T-cell (primary cell): ENCODE measurements at regions of chr13 and their contacts with region 1.

Region 1: GRCh38 chr13:28796938-28797257 is 23.2 kb upstream of the MTUS2 start:
- DNase-seq: no peak
- ATAC-seq: no peak
- H3K4me3 ChIP-seq: no peak overlapping the region
- H3K4me3 Mint-ChIP-seq: peak overlapping the region in 1 of 3 donors; percentile 70
- H3K27ac ChIP-seq: no peak overlapping the region
- H3K27ac Mint-ChIP-seq: no peak overlapping the region
- H3K4me1 ChIP-seq: peaks cover 0 to 4% of the 10 kb centered on the region in 2 experiments
- H3K4me1 Mint-ChIP-seq: peaks cover 2 to 10% (median 3%) of the 10 kb centered on the region in 3 donors
- H3K27me3 ChIP-seq: peaks cover 0 to 10% of the 10 kb centered on the region in 2 experiments
- H3K27me3 Mint-ChIP-seq: peaks cover 16 to 24% of the 10 kb centered on the region in 2 donors

Region 2: DNA sequence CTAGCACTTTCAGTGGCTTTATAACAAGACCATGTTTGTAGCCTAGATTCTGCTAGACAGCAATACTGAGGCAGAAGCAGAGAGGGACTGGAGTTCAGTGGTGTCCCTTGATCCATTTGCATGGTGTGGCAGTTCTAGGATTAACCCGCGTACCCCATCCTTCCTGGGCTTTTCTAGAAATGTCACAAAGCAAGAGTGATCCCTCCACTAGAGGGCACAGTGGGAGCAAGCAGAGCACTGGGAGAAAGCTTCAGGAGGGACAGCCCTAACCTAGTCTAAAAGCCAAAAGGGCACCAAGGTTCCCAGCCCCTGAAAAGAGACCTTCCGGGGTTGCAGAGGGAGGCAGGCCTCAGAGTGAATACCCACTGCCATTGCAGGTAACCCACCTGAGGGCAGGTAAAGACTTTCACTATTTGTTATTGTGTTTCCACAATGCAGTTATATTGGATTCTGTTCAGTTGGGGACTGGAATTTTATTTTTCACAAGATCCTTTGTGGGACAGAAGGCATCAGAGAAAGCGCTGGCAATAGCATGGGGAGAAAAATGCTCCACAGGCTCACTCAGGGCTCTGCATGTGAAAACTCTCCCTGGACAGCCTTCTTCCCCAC is 472.6 kb before region 1 on chr13:
- CTCF ChIA-PET with region 1: interaction called, 5 to 17 read pairs
- POLR2A ChIA-PET with region 1: no interaction called
- DNase-seq: peak in 34 of 35 experiments; percentile 1 to 70 (median 32)
- ATAC-seq: peak; percentile 58 to 67 (median 63)
- H3K4me3 ChIP-seq: no peak overlapping the region
- H3K4me3 Mint-ChIP-seq: no peak overlapping the region
- H3K27ac ChIP-seq: no peak overlapping the region
- H3K27ac Mint-ChIP-seq: no peak overlapping the region
- H3K4me1 ChIP-seq: no peaks in the 10 kb centered on the region
- H3K4me1 Mint-ChIP-seq: peaks cover 0 to 7% (median 0%) of the 10 kb centered on the region in 3 donors
- H3K27me3 ChIP-seq: no peaks in the 10 kb centered on the region
- H3K27me3 Mint-ChIP-seq: no peaks in the 10 kb centered on the region

Region 3: DNA sequence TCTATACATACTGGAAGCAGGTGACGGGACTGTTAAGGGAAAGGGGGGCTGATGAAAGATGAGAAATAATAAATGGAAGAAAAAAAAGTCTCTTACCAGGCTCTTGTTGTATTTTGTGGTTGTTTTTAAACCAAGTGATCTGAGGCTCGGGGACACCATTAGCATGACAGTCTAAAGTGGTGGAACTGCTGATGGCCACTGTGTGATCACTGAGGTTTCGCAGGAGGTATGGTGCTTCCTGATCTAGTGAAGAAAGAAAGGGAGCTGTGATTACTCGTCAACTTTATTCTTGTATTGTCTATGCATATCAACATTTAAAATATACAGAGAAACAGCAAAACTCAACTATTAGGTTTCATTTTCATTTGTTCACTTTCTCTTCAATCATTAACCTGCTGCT is 412.1 kb before region 1 on chr13:
- CTCF ChIA-PET with region 1: interaction called in 1 of 2 experiments, 13 read pairs
- POLR2A ChIA-PET with region 1: no interaction called
- DNase-seq: no peak
- ATAC-seq: no peak
- H3K4me3 ChIP-seq: no peak overlapping the region
- H3K4me3 Mint-ChIP-seq: no peak overlapping the region
- H3K27ac ChIP-seq: no peak overlapping the region
- H3K27ac Mint-ChIP-seq: no peak overlapping the region
- H3K4me1 ChIP-seq: no peaks in the 10 kb centered on the region
- H3K4me1 Mint-ChIP-seq: peaks cover 0 to 7% (median 6%) of the 10 kb centered on the region in 3 donors
- H3K27me3 ChIP-seq: peaks cover 0 to 3% of the 10 kb centered on the region in 2 experiments
- H3K27me3 Mint-ChIP-seq: peaks cover 0 to 11% of the 10 kb centered on the region in 2 donors